ENCODE measurements at regions of chr21 and their contacts with region 1.

Region 1: DNA sequence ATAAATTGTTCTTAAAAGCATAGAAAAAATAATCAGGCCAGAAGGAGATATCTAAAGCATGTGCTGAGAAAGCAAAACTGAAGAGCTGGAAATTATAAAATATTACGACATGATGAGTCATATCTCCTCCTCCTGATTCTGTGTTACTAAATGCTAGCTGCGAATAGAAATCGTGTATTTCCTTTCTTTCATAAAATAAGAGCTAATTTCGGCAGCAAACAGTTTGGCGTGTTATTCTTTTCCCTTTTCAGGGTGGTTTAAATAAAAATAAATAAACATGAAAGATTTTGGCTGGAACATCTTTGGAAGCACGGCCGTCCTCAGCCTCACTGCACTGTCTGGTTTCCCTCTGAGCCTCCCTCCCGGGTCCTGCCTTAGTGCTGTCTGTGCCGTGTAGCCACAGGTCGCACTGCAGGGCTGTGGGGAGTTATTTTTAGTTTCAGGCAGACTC is 56.0 kb downstream of the ADARB1 start:
- DNase-seq: no peak
- ATAC-seq: no peak
- H3K4me3 Mint-ChIP-seq: no peak overlapping the region
- H3K27ac Mint-ChIP-seq: no peak overlapping the region
- H3K4me1 Mint-ChIP-seq: peaks cover 29% of the 10 kb centered on the region
- H3K27me3 Mint-ChIP-seq: no peaks in the 10 kb centered on the region
- CTCF ChIP-seq: no peak

Region 2: DNA sequence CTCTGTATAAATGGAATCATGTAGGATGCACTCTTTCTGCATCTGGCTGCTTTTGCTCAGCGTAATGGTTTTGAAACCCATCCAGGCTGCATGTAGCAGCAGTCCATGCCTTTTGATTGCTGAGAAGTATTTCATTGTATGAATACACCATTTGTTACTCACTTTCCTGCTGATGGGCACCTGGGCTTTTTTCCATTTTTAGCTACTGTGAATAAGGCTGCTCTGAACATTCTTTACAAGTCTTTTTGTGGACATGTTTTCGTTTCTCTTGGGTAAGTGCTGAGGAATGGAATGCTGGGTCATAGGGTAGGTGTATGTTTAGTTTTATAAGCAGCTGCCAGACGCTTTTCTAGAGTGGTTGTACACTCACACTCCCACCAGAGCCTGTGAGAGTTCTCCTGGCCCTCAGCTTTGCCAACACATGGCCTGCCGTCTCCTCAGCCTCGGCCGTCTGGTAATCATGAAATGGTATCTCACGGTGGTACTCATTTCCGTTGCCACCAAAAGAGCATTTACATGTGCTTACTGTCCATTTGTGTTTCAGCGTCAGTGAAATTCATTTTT is 167.9 kb before region 1 on chr21:
- CTCF ChIA-PET with region 1: interaction called, 16 read pairs
- POLR2A ChIA-PET with region 1: no interaction called
- intact Hi-C with region 1: no loop called
- DNase-seq: no peak
- ATAC-seq: no peak
- H3K4me3 Mint-ChIP-seq: no peak overlapping the region
- H3K27ac Mint-ChIP-seq: no peak overlapping the region
- H3K4me1 Mint-ChIP-seq: peaks cover 28% of the 10 kb centered on the region
- H3K27me3 Mint-ChIP-seq: no peaks in the 10 kb centered on the region
- CTCF ChIP-seq: no peak

Region 3: GRCh38 chr21:45054921-45055612 is 75.3 kb before region 1 on chr21:
- CTCF ChIA-PET with region 1: interaction called, 10 read pairs
- POLR2A ChIA-PET with region 1: interaction called, 4 read pairs
- intact Hi-C with region 1: no loop called
- DNase-seq: no peak
- ATAC-seq: no peak
- H3K4me3 Mint-ChIP-seq: no peak overlapping the region
- H3K27ac Mint-ChIP-seq: no peak overlapping the region
- H3K4me1 Mint-ChIP-seq: no peaks in the 10 kb centered on the region
- H3K27me3 Mint-ChIP-seq: peaks cover 15% of the 10 kb centered on the region
- CTCF ChIP-seq: no peak

Region 4: GRCh38 chr21:45074048-45074817 is 56.1 kb before region 1 on chr21 and contains the start of gene ADARB1:
- CTCF ChIA-PET with region 1: interaction called, 67 read pairs
- POLR2A ChIA-PET with region 1: interaction called, 4 read pairs
- intact Hi-C with region 1: loop called (anchors 10 kb)
- DNase-seq: peak; percentile 56
- ATAC-seq: peak; percentile 40
- H3K4me3 Mint-ChIP-seq: peak within 1 kb of the TSS; percentile 87
- H3K27ac Mint-ChIP-seq: peak within 1 kb of the TSS; percentile 87
- H3K4me1 Mint-ChIP-seq: peaks cover 39% of the 10 kb centered on the region
- H3K27me3 Mint-ChIP-seq: no peaks in the 10 kb centered on the region
- CTCF ChIP-seq: no peak
- total RNA-seq, gene ADARB1: 36.2 to 37.1 TPM

Region 5: DNA sequence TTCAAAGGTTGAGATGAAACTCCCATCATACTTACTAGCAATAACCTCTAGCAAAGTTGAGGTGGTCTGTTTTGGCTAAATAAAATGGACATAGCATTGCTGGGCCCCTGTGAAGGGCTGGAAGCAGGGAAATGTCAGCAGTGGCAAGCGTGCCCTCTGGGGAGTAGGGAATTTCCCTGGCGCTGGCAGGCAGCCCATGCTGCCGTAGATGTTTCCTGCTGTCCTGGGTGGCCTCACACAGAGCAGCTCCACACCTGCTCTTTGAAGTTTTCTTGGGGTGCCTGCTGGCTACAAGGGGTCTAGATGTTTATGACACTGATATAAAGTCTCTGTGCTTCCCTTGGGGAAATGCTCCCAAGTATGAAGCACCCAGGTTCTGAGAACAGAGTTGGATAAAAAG is 25.8 kb before region 1 on chr21:
- CTCF ChIA-PET with region 1: interaction called, 42 read pairs
- POLR2A ChIA-PET with region 1: interaction called, 3 read pairs
- intact Hi-C with region 1: no loop called
- DNase-seq: peak; percentile 62
- ATAC-seq: peak; percentile 82
- H3K4me3 Mint-ChIP-seq: peak overlapping the region; percentile 33
- H3K27ac Mint-ChIP-seq: peak overlapping the region; percentile 40
- H3K4me1 Mint-ChIP-seq: peaks cover 57% of the 10 kb centered on the region
- H3K27me3 Mint-ChIP-seq: no peaks in the 10 kb centered on the region
- CTCF ChIP-seq: no peak

Region 6: GRCh38 chr21:45223236-45224185 is 93.2 kb after region 1 on chr21:
- CTCF ChIA-PET with region 1: no interaction called
- POLR2A ChIA-PET with region 1: no interaction called
- intact Hi-C with region 1: no loop called
- DNase-seq: no peak
- ATAC-seq: no peak
- H3K4me3 Mint-ChIP-seq: no peak overlapping the region
- H3K27ac Mint-ChIP-seq: no peak overlapping the region
- H3K4me1 Mint-ChIP-seq: peaks cover 35% of the 10 kb centered on the region
- H3K27me3 Mint-ChIP-seq: no peaks in the 10 kb centered on the region
- CTCF ChIP-seq: no peak

Region 7: DNA sequence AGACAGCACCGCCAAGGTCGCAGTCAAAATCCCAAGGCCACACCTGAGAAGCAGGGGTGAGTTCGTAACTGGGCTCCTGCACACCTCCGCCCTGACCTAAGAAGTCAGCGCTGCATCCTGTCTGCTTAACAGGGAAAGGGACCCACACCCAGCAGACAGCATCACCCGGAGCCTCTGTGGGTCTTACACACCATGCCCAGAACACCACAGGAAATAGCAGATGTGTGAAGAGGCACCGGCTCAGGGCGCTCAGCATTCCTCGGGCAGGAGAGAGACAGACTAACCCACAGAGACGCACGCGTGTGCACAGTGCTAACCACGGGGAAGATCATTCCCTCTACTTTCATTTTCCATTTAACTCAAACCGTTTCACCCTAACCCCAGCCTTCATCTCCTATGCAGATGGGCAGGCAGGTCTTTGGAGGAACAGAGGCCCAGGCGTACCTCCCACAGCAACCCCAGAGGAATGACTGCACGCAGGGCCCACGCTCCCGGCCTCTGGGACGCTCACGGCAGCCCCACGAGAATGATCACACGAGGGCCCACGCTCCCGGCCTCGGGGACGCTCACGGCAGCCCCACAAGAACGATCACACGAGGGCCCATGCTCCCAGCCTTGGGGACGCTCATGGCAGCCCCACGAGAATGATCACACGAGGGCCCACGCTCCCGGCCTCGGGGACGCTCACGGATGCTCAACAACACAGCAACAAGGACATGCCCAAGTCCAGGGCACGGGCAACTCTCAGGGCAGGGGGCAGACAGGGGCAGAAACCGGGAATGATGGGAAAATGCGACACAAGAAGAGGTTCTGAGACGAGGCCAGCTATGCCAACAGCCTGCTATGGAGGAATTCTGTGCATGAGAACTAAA is 136.4 kb after region 1 on chr21:
- CTCF ChIA-PET with region 1: no interaction called
- POLR2A ChIA-PET with region 1: no interaction called
- intact Hi-C with region 1: no loop called
- DNase-seq: peak; percentile 53
- ATAC-seq: peak; percentile 84
- H3K4me3 Mint-ChIP-seq: no peak overlapping the region
- H3K27ac Mint-ChIP-seq: peak overlapping the region; percentile 34
- H3K4me1 Mint-ChIP-seq: peaks cover 20% of the 10 kb centered on the region
- H3K27me3 Mint-ChIP-seq: no peaks in the 10 kb centered on the region
- CTCF ChIP-seq: no peak